ENCODE measurements at regions of chr1 and their contacts with region 1.

Region 1: DNA sequence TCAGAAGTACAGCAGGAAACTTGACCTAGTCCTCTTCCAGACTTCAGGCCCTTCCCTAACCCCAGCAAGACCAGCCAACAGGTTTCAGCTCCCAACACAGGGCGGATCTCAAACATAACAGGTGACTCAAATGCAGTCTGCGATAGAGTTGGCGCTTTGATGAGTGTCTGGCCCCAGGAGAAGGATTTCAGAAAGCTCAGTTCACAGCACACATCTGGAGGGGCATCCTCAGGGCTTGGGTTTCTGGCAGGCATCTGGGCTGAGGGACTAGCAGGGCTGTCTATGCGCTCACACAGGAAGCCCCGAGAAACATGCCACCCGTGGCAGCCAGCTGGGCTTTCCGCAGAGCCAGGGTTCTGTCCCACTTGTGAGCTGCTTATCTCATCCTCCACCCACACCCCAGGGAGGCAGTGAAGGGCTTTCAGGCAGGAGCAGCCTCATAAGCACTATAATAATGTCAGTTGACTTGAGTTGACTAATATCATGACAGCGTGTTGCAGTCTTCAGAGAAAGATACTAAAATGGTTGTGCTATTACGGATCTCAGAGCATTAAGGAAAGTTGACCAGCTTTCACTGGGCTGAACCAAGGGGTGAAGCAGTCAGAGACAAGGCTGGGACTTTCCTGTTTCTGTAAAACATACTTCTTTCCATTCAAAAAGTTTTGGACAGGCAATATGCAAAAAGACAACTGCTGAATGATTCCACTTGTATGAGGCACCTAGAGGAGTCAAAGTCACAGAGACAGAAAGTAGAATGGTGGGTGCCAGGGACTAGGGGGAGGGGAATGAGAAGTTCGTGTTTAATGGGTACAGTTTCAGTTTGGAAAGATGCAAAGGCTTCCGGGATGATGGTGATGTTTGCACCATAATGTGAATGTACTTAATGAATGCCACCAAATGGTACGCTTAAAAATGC is 233.0 kb upstream of the IRF2BP2 start:
- DNase-seq: peak; percentile 93
- ATAC-seq: peak; percentile 83
- H3K4me3 Mint-ChIP-seq: peak overlapping the region; percentile 63
- H3K27ac Mint-ChIP-seq: peak overlapping the region; percentile 94
- H3K4me1 Mint-ChIP-seq: peaks cover 85% of the 10 kb centered on the region
- H3K27me3 Mint-ChIP-seq: no peaks in the 10 kb centered on the region

Region 2: GRCh38 chr1:234730770-234731568 is 112.0 kb before region 1 on chr1:
- CTCF ChIA-PET with region 1: no interaction called
- POLR2A ChIA-PET with region 1: interaction called, 3 read pairs
- intact Hi-C with region 1: loop called (anchors 1 kb)
- DNase-seq: peak; percentile 77
- ATAC-seq: peak; percentile 87
- H3K4me3 Mint-ChIP-seq: peak overlapping the region; percentile 32
- H3K27ac Mint-ChIP-seq: peak overlapping the region; percentile 92
- H3K4me1 Mint-ChIP-seq: peaks cover 71% of the 10 kb centered on the region
- H3K27me3 Mint-ChIP-seq: no peaks in the 10 kb centered on the region

Region 3: DNA sequence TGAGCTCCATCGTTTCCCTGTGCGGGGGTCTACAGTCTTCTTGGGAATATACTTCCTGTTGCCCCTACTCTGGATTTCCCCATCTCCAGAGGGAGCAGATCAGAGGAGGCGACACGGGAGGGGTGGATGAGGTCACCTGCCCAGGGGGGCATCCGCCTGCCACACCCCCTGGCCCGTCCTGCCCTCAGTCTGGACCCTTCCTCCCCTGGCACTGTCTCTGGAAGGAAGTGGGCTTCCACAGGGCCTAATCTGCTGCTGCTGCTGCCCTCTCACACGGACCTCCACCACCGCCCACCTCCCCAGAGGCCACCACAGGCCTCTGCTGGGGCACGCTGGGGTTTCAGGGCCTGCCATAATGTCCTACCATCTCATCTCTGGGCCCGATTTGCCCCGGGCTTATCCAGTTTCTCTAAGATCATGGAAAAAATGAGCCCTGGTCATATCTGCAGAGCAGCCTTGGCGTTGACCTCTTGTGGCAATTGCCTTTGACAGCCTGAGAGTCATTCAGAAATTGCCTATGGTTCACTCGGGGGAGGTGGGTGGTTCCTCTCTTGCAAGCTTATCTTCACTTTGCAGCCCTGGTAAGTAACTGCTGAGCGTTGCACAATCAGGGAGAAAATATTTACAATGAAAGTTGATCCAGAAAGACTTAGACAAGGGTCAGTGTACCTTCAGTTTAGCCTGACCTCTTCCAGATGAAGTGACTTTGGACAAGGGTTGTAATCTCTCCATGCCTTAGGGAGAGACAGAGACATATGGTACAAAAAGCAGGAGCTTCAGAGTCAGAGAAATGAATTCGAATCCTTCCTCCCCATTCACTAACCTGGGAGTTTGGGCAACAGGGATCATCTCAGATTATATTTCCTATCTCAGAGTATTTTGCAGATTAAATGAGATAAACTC is 33.2 kb after region 1 on chr1:
- CTCF ChIA-PET with region 1: interaction called, 4 read pairs
- POLR2A ChIA-PET with region 1: no interaction called
- intact Hi-C with region 1: loop called in 1 of 2 experiments (anchors 5 kb)
- DNase-seq: peak; percentile 68
- ATAC-seq: peak; percentile 83
- H3K4me3 Mint-ChIP-seq: peak overlapping the region; percentile 15
- H3K27ac Mint-ChIP-seq: peak overlapping the region; percentile 69
- H3K4me1 Mint-ChIP-seq: peaks cover 46% of the 10 kb centered on the region
- H3K27me3 Mint-ChIP-seq: no peaks in the 10 kb centered on the region

Region 4: GRCh38 chr1:234907940-234908405 is 65.0 kb after region 1 on chr1:
- CTCF ChIA-PET with region 1: no interaction called
- POLR2A ChIA-PET with region 1: no interaction called
- intact Hi-C with region 1: no loop called
- DNase-seq: no peak
- ATAC-seq: no peak
- H3K4me3 Mint-ChIP-seq: no peak overlapping the region
- H3K27ac Mint-ChIP-seq: no peak overlapping the region
- H3K4me1 Mint-ChIP-seq: peaks cover 19% of the 10 kb centered on the region
- H3K27me3 Mint-ChIP-seq: no peaks in the 10 kb centered on the region

Region 5: DNA sequence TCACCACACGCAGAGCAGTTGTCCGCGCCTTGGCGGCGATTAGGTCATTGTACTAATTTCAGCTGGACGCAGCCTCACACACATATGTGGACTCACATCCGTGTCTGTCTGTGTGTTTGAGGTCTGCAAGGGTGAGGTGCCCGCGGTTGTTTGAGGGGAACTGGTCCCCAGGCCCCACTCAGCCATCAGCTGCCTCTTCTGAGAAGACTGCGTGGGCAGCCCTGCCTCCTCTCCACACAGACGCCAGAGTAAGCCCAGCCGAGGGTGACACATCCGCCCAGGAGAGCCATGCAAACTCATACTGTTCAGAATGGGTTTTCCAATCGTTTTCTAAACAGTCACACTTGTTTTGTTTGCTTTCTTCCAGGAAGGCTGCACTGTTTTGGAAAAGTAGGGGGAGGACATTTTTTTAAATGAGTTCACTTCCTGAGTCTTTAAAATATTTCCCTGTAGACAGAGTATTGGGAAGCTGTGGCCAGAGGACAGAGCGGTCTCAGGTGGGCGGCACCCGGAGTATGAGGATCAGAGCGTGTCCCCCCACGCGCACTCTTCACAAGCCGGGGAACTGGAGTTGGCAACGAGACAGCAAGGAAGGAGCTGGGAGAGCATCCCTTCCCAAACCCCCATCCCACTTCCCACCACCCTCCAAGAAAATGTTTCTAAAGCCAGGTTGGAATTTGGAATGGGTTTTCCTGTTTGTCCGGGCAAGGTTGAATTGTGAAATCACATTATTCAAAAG is 232.4 kb after region 1 on chr1:
- CTCF ChIA-PET with region 1: no interaction called
- POLR2A ChIA-PET with region 1: interaction called, 4 read pairs
- intact Hi-C with region 1: loop called (anchors 1 kb)
- DNase-seq: peak; percentile 86
- ATAC-seq: peak; percentile 64
- H3K4me3 Mint-ChIP-seq: peak overlapping the region; percentile 41
- H3K27ac Mint-ChIP-seq: peak overlapping the region; percentile 98
- H3K4me1 Mint-ChIP-seq: peaks cover 28% of the 10 kb centered on the region
- H3K27me3 Mint-ChIP-seq: no peaks in the 10 kb centered on the region

Region 6: GRCh38 chr1:235999259-235999925 is 1156.4 kb after region 1 on chr1:
- CTCF ChIA-PET with region 1: no interaction called
- POLR2A ChIA-PET with region 1: no interaction called
- intact Hi-C with region 1: loop called in 1 of 2 experiments (anchors 2 kb)
- DNase-seq: peak; percentile 76
- ATAC-seq: peak; percentile 85
- H3K4me3 Mint-ChIP-seq: peak overlapping the region; percentile 32
- H3K27ac Mint-ChIP-seq: peak overlapping the region; percentile 94
- H3K4me1 Mint-ChIP-seq: peaks cover 58% of the 10 kb centered on the region
- H3K27me3 Mint-ChIP-seq: no peaks in the 10 kb centered on the region